ENCODE measurements at regions of chr20 and their contacts with region 1.

Region 1: DNA sequence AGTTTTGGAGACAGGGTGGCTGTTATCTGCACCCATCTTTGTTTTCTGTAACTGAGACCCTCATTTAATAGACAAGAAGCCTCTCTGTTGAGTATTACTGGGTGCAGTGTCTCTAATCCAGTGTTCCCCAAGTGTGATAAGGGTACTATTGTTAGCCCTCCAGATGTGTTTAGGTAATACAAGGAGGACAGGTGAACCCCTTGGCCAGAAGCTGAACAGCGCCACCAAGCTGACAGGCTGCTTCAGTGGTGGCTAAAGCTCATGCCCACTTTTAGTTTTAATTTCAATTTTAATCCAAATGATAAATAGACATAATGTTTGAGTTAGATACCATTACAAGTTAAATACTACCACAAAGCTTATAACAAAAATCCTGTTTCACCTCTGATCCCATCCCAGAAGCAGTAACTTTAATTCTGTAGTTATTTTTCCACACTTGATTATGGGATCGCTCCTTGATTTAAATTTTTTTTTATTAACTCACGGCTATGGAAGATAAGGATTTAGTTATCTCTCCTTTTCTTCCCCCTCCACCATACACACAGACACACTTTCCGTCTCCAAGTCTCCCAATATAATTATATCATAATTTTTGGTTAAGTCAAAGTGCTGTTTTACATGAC is 8.4 kb upstream of the STK35 start:
- DNase-seq: no peak
- ATAC-seq: no peak

Region 2: DNA sequence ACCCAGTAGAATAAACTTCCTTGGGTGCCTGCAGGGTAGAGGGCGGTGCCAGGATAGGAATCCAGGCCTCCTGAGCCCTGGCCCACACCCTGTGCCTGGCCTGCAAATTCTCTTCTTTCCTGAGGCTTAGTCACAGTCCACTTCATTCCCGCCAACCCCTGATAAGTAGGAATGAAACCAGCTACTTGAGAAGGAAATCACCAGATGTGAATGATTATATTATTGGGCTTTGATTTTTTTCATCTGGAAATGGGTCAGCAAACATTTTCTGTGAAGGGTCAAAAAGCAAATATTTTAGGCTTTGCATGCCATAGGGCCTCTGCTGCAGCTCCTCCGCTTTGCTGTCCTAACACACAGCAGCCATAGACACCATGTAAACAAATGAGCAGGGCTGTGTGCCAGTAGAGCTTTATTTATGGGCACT is 58.6 kb after region 1 on chr20:
- intact Hi-C with region 1: loop called (anchors 10 kb)
- DNase-seq: no peak
- ATAC-seq: peak; percentile 83

Region 3: DNA sequence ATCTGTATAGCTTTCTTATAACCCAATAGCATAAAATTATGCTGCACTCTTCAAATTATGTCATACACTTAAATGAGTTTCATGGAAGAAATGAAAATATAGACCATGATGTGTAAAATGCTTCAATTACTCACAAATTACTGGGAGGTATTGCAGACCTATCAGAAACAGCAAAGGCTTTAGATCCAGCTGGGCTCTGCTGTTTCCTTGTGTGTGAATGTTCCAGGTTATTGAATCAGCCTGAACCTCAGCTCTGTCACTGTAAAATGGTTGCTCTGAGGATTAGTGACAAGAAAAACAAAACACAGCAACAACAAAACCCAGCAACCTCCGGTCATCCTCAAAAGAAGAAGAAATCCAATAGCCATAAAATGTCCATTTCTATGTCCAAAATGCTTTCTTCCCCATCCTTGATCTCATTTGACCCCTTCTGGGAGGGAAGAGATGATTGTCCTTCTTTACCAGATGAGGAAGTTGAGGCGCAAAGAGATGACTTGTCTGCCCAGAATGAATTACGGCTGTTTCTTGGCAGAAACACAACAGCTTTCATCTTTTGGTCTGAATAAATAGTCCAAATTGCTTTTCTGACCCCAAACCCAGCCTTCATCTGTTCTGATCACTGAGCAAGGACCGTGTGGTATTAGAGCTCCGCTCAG is 245.3 kb after region 1 on chr20:
- intact Hi-C with region 1: no loop called
- DNase-seq: no peak
- ATAC-seq: no peak

Region 4: DNA sequence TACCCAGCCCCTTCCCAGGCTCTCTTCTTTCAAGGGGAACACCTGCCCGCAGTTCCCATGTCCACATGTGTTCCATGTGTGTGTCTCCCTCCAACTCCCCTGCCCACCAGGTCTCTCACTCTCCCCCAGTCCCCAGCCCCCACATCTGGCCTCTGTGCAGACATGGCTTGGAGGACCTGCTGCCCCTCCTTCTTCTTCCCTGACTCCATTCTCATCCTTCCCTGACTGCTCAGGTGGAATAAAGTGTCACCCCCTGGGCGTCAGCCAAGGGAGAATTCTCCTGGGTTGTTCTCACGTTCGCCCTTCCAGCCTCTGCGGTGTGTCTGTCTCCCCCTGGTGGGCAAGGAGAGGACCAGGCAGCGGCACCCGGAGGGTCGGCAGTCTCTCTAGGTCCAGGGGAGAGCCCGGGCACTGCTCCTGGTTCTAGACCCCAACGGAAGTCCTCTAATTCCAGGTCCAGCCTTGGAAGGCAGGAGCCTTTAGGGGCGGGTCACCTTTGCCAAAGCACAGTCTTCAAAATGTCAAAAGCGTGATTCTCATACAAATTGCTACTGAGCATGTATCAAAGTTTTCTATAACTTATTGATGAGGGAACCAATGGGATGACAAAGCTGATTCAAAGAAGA is 649.8 kb after region 1 on chr20:
- intact Hi-C with region 1: no loop called
- DNase-seq: peak; percentile 56
- ATAC-seq: peak; percentile 55